Sciatic nerve (tissue), 2 donors: ENCODE measurements at regions of chr9 and their contacts with region 1.

Region 1: DNA sequence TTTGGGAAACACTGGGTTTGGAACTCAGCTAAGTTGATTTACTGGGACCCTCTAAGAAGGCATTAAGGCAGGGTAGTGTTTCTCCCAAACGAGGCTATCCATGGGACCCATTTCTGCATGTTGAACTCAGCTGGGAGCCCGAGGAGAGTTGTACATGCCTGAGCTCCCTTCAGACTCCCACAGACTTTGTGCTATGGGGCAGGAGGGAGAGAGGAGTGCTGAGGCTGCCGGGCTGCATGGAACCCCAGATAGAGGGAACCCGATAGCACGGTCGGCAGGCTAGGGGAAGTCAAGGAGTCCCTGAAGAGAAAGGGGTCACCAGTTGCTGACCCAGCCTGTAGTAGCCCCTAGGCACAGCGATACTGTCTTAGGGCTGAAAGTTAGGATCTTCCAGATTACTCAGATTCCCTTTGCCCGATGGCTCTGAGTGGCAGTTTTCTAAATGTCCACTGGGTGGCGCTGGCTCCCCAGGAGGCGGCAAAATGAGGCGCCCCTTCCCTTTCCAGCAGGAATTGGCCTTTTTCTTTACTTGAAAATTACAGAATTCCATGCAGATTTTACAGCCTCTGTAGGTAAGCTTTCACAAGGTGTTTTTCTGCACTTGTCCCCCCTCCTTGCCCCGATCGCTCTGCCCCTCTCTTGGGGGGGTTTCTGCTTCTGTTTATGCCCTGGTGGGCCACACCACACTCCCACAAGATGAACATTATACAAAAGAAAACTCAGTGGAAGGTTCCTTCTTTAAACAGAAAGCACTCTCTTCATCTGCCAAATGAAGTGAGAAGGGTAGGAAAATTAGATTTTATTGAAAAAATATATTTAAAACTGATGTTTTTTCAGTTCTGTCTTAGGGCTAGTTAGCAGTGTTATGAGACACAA is 17.8 kb downstream of the NANS start:
- DNase-seq: peak; percentile 83
- ATAC-seq: peak; percentile 81

Region 2: DNA sequence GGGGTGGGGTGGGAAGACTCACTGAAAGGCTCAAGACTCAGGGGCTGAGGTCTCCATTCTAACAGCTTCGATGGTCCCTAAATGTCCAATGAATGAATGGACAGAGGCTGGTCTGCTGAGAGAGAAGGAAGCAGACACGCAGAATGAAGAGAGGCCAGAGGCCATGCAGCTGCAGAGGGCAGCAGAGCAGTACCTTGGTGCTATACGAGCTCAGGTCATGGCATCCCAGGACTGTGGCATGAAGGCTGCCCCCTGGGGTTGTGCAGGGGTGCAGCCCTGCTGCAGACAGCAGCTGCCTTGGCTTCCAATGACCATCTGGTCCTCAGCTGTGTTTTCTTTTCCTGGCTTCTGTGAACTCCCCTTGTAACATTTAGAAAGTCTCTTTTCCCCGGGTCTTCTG is 133.3 kb after region 1 on chr9:
- intact Hi-C with region 1: loop called (anchors 10 kb)
- DNase-seq: no peak
- ATAC-seq: peak; percentile 61

Region 3: DNA sequence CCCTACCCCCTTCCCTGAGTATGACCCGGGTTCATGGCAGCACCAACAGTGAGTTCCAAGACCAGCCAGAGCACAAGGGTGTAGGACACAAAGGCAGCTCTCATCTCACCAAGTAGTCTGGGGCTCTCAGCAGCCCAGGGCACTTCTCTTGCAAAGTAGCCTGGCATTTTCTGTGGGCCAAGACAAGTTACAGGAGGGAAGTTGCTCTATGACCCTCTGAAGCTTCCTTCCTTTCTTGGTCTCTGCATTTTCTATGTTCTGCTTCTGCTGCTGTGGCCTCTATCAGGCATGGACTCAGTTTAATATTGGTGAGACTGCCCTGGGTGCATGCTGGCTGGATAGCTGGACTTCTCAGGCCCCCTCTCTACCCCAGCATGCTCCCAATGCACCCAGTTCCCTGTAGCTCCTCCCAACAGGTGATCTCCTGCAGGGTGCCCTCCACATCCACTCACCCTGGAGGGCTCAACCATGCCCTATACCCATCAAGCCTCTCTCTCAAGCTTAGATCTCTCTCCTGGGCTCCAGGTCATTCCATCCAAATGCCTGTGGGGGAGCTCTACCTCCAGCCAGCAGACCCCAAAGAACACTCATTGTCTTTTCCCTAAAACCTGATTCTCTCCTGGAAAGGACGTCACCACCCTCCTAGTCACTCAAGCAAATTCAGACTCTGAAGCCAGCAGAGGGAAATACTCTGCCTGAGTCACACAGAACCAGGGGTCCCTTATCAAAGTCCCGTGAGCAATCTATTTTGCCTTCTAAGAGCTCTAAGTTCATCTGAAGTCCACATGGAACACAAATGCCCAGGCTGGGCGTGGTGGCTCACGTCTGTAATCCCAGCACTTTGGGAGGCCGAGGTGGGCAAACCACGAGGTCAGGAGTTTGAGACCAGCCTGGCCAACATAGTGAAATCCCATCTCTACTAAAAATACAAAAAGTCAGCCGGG is 167.3 kb after region 1 on chr9:
- intact Hi-C with region 1: no loop called
- DNase-seq: no peak
- ATAC-seq: no peak